Cardiac septum (tissue), 1 donor: ENCODE measurements at regions of chr15 and their contacts with region 1.

Region 1: DNA sequence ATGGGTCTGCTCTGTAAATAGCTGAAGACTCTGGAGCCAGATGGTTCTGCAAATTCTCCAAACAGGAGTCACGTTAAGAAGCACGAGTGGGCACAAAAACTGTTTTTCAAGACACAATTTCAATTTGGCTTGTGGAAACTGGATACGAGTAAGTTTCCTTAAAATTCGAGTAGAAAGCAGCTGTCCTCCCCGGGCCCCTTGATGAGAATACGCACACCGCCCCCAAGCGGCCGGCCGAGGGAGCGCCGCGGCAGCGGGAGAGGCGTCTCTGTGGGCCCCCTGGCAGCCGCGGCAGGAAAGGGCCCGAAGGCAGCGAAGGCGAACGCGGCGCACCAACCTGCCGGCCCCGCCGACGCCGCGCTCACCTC is 778 bp upstream of the THBS1 start:
- DNase-seq: peak; percentile 96

Region 2: DNA sequence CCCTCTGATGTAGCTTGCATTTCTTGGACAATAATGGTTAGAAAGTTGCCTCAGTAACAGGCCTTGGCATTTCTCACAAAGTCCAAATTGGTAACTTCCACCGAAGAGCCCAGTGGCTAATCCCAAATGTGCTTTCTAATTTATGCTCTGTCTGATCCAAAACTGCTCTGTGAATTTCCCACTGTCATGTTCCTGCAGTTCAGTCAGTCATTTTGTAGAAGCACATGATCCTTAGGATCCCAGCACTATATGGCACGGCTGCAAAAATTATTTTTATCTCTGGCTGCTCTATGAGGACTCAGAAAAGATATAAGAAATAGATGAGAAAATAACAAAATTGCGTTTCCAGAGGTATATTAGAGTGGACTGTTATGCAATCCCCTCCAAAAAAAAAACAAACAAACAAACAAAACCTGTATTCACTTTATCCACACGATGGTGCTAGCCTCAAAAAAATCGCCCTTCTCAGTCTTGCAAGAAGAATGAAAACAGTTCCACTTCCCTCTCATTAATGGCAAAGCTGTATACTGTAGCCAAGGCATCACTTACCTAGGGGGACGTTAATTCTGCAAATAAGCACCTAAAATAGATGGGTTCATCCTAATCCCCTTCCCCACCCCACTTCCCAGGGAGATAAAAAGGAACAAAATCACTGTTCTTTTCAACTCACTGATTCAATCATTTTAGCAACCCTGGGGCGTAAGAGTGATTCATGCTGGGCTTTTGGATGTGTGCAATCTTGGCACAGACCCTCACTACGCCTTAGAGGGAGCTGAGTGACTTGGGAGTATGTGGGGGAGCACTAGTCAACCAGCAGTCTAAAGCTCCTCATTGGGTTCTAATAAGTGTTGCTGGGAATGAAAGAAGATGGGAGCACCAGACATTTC is 1584.4 kb before region 1 on chr15:
- intact Hi-C with region 1: loop called (anchors 10 kb)
- DNase-seq: no peak

Region 3: DNA sequence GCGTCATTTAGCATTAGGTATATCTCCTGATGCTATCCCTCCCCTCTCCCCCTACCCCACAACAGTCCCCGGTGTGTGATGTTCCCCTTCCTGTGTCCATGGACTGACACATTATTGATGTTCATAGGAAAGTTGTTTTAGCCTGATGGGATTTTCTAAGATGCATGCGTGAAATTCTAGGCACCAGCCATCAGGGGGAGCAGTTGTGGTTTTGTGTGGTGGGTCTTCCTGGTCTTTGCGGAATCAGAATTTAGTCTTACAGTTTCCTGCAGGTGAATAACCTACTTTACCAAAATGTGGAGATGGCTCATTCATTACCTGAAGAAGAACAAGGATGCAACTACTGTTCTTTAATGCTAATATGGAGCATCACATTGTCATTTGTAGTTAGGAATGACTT is 454.2 kb before region 1 on chr15:
- intact Hi-C with region 1: loop called (anchors 2 kb)
- DNase-seq: no peak

Region 4: DNA sequence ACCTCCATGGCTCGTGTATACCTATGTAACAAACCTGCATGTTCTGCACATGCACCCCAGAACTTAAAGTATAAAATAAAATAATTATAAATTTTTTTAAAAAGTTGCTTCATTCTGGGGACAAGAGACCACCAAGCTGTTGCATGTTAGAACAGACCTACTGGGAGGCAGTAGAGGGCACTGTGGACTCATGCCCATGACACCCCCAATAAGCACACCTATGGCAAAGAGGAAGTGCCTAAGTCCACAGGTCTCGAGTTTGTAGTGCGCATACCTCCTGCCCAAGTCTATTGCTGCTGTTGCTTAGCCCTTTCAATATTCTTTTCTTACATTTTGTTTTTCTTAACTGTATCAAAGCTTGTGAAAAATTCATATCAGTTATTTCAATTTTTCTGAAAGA is 267.1 kb before region 1 on chr15:
- intact Hi-C with region 1: loop called (anchors 2 kb)
- DNase-seq: no peak

Region 5: GRCh38 chr15:39444735-39445470 is 135.2 kb before region 1 on chr15:
- intact Hi-C with region 1: loop called (anchors 5 kb)
- DNase-seq: no peak

Region 6: GRCh38 chr15:39756806-39757522 is 176.9 kb after region 1 on chr15:
- intact Hi-C with region 1: loop called (anchors 5 kb)
- DNase-seq: no peak